ENCODE measurements at regions of chr5 and their contacts with region 1.

Region 1: GRCh38 chr5:27472000-27472763 is 433.8 kb upstream of the CDH9 start:
- DNase-seq: peak; percentile 65 to 89 (median 71)
- ATAC-seq: peak; percentile 99
- H3K4me3 ChIP-seq: peak overlapping the region; percentile 40
- H3K27ac ChIP-seq: peak overlapping the region; percentile 71; the same call in 2 of the 3 replicates
- H3K4me1 ChIP-seq: no peaks in the 10 kb centered on the region
- H3K27me3 ChIP-seq: no peaks in the 10 kb centered on the region
- CTCF ChIP-seq: no peak
- EP300 ChIP-seq: no peak
- POLR2A ChIP-seq: peak; percentile 64
- RAD21 ChIP-seq: no peak

Region 2: GRCh38 chr5:27103486-27103885 is 368.7 kb before region 1 on chr5:
- CTCF ChIA-PET with region 1: no interaction called
- POLR2A ChIA-PET with region 1: no interaction called
- in situ Hi-C with region 1: no loop called
- intact Hi-C with region 1: no loop called
- DNase-seq: no peak
- ATAC-seq: no peak
- H3K4me3 ChIP-seq: no peak overlapping the region
- H3K27ac ChIP-seq: no peak overlapping the region
- H3K4me1 ChIP-seq: no peaks in the 10 kb centered on the region
- H3K27me3 ChIP-seq: no peaks in the 10 kb centered on the region
- CTCF ChIP-seq: no peak
- EP300 ChIP-seq: no peak
- POLR2A ChIP-seq: no peak
- RAD21 ChIP-seq: no peak

Region 3: DNA sequence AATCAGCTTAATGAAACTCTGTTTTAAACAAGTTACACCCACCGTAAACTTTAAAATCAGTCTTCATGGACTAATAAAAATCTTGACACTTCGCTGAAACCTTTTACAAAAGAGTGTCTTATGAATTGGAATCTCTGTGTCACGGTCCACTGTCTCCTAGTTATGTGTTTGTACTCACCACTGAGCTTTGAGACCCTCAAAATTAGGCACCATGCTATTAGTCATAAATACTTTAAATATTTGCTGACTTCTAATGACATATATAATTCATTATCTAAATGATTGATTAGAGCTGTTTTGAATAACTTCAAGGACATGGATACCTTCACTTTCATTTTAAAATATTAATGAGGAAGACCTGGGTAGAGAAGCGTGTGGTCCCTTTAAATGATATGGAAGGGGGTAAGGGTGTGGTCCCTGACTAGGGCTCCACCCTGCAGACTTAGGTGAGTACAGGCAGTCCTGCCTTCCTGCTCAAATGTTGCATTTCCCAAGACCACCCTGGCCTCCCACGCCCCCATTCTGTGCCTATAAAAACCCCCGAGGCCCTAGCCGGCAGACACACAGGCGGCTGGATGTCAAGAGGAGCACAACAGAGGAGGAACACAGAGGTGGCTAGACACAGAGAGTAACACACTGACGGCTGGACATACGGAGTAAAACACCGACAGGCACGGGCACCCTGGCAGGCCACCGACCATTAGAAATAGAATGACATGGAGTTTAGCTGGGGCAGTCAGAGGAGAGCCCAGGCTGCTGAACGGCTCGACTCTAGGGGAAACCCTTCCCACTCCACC is 254.8 kb before region 1 on chr5:
- CTCF ChIA-PET with region 1: no interaction called
- POLR2A ChIA-PET with region 1: interaction called, 3 read pairs
- in situ Hi-C with region 1: no loop called
- intact Hi-C with region 1: loop called (anchors 2 kb)
- DNase-seq: peak; percentile 33 to 85 (median 54)
- ATAC-seq: peak; percentile 83
- H3K4me3 ChIP-seq: peak overlapping the region; percentile 43
- H3K27ac ChIP-seq: peak overlapping the region; percentile 17; the same call in 2 of the 3 replicates
- H3K4me1 ChIP-seq: no peaks in the 10 kb centered on the region
- H3K27me3 ChIP-seq: no peaks in the 10 kb centered on the region
- CTCF ChIP-seq: no peak
- EP300 ChIP-seq: no peak
- POLR2A ChIP-seq: peak; percentile 98
- RAD21 ChIP-seq: no peak